ENCODE measurements at regions of chr2 and their contacts with region 1.

Region 1: DNA sequence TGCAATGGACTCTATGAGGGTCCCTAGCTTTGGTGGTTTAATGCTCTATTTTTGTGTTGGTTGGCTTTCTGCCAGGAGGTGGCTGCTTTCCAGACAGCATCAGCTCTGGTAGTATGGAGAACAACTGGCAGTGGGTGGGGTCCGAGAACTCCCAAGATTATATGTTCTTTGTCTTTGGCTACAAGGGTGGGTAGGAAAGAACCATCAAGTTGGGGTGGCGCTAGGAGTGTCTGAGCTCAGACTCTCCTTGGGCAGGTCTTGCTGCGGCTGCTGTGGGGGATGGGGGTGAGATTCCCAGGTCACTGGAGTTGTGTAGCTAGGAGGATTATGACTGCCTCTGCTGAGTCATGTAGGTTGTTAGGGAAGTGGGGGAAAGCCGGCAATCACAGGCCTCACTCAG is 976.1 kb upstream of the GYPC start:
- DNase-seq: no peak
- H3K4me3 ChIP-seq: no peak overlapping the region
- H3K27ac ChIP-seq: no peak overlapping the region
- H3K27me3 ChIP-seq: no peaks in the 10 kb centered on the region
- CTCF ChIP-seq: no peak

Region 2: GRCh38 chr2:125634662-125635061 is 45.2 kb before region 1 on chr2:
- intact Hi-C with region 1: no loop called
- DNase-seq: no peak
- H3K4me3 ChIP-seq: no peak overlapping the region
- H3K27ac ChIP-seq: no peak overlapping the region
- H3K27me3 ChIP-seq: no peaks in the 10 kb centered on the region
- CTCF ChIP-seq: no peak

Region 3: DNA sequence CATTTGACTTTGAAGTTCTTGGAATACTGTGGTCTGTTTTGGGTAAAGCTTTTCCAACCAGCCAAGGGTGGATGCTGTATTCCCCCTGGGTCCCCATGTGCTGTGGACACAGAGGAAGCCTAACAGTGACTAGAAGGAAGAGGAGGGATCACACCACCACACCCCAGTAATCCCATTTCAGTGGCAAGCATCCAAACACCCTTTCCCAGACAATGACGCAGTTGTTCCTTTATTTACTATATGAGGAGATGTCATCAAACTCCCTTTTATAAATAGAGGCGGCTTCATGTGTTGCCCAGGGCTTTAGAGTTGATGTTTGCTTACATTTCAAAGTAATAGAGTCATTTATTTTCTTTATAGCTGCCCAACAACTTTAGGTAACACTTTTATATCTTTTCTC is 16.7 kb after region 1 on chr2:
- intact Hi-C with region 1: loop called in 1 of 2 experiments (anchors 1 kb)
- DNase-seq: no peak
- H3K4me3 ChIP-seq: no peak overlapping the region
- H3K27ac ChIP-seq: no peak overlapping the region
- H3K27me3 ChIP-seq: no peaks in the 10 kb centered on the region
- CTCF ChIP-seq: no peak

Region 4: DNA sequence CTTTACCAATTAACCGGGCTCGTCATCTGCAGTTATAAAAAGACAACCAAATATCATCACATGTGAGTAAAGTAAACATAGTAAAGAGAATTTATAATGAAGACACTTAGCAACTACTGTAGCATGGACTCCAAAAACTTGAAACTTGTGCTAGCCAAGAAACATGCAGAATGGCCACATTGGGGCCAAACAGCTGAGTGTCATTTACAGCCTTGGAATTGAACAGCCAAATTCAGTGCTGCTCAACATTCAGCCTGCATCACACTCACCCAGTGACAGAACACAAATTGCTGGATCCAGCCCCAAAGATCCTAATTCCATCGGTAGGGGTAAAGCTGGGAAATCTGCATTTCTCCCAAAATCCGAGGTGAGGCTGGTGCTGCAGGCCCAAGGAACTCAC is 751.2 kb after region 1 on chr2:
- intact Hi-C with region 1: loop called in 1 of 2 experiments (anchors 10 kb)
- DNase-seq: no peak
- H3K4me3 ChIP-seq: no peak overlapping the region
- H3K27ac ChIP-seq: peak overlapping the region in 2 of 59 donors; percentile 22 to 61
- H3K27me3 ChIP-seq: no peaks in the 10 kb centered on the region
- CTCF ChIP-seq: no peak

Measured in dorsolateral prefrontal cortex (tissue), 120 donors.